CD4-positive, alpha-beta memory T cell (primary cell): ENCODE measurements at regions of chr3 and their contacts with region 1.

Region 1: GRCh38 chr3:57169872-57170623 is 4.9 kb upstream of the IL17RD start:
- DNase-seq: peak in 4 of 5 donors; percentile 37 to 45 (median 41)
- H3K4me3 ChIP-seq: peak overlapping the region in 1 of 2 donors; percentile 27
- H3K4me3 Mint-ChIP-seq: peak overlapping the region; percentile 10 to 74 (median 50)
- H3K27ac ChIP-seq: no peak overlapping the region
- H3K27ac Mint-ChIP-seq: no peak overlapping the region
- H3K4me1 ChIP-seq: peaks cover 3% of the 10 kb centered on the region
- H3K4me1 Mint-ChIP-seq: peaks cover 4 to 11% (median 6%) of the 10 kb centered on the region in 4 donors
- H3K27me3 ChIP-seq: peaks cover 10% of the 10 kb centered on the region
- H3K27me3 Mint-ChIP-seq: peaks cover 31 to 44% of the 10 kb centered on the region in 2 donors

Region 2: GRCh38 chr3:57158813-57159738 is 11.0 kb before region 1 on chr3:
- CTCF ChIA-PET with region 1: interaction called, 23 read pairs
- POLR2A ChIA-PET with region 1: interaction called, 3 read pairs
- intact Hi-C with region 1: no loop called
- DNase-seq: peak in 2 of 5 donors; percentile 16
- H3K4me3 ChIP-seq: no peak overlapping the region
- H3K4me3 Mint-ChIP-seq: peak overlapping the region in 5 of 8 donors; percentile 2 to 66 (median 31)
- H3K27ac ChIP-seq: no peak overlapping the region
- H3K27ac Mint-ChIP-seq: peak overlapping the region in 1 of 7 donors; percentile 19
- H3K4me1 ChIP-seq: peaks cover 13% of the 10 kb centered on the region
- H3K4me1 Mint-ChIP-seq: peaks cover 9 to 27% (median 13%) of the 10 kb centered on the region in 4 donors
- H3K27me3 ChIP-seq: peaks cover 4% of the 10 kb centered on the region
- H3K27me3 Mint-ChIP-seq: peaks cover 13 to 35% of the 10 kb centered on the region in 2 donors

Region 3: DNA sequence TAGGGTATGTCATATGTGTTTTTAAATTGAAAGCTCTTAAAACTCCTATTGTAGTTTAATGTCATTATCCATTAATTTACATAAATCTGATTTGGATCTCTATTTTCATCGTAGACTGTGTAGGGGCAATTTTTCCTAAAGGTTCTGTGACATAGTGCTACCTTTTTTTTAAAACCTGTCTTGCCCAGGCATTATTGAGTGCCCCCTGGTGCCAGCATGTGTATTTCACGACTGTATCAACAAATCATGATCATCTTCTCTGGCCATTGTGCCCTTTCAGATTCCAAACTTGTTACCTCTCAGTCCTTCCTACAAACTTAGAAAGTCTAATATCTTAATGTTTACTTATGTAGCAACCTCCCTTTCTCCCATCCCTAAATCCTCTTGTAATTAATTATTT is 740.9 kb after region 1 on chr3:
- CTCF ChIA-PET with region 1: no interaction called
- POLR2A ChIA-PET with region 1: no interaction called
- intact Hi-C with region 1: loop called (anchors 1 kb)
- DNase-seq: peak in 3 of 5 donors; percentile 11 to 14 (median 13)
- H3K4me3 ChIP-seq: no peak overlapping the region
- H3K4me3 Mint-ChIP-seq: no peak overlapping the region
- H3K27ac ChIP-seq: no peak overlapping the region
- H3K27ac Mint-ChIP-seq: no peak overlapping the region
- H3K4me1 ChIP-seq: no peaks in the 10 kb centered on the region
- H3K4me1 Mint-ChIP-seq: no peaks in the 10 kb centered on the region
- H3K27me3 ChIP-seq: no peaks in the 10 kb centered on the region
- H3K27me3 Mint-ChIP-seq: no peaks in the 10 kb centered on the region